Naive thymus-derived CD8-positive, alpha-beta T cell (primary cell): ENCODE measurements at regions of chr11 and their contacts with region 1.

Region 1: DNA sequence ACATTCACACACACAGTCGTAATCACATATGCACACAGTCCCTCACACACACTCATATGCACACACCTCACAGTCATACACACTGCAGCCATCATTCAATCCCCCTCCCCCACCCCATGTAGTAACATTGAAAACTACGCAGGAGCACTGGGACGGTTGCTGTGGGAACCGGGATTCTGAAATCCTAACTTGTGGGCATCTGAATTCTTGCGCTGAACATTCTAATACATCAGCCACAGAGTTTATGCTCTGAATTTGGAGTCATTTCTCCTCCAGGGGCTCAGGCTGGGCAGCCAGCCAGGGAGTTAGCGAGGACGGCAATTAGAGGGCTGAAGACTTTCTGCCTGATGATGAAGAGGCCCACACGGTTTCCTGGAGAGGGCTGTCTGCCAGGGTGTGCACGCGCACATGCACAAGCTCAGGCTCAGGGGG is 32.7 kb downstream of the CD6 start:
- DNase-seq: peak in 7 of 10 donors; percentile 35 to 74 (median 47)
- ATAC-seq: peak; percentile 64 to 71
- H3K4me3 Mint-ChIP-seq: peak overlapping the region; percentile 60 to 88 (median 78)
- H3K27ac Mint-ChIP-seq: peak overlapping the region; percentile 88 to 98 (median 95)
- H3K4me1 Mint-ChIP-seq: peaks cover 44 to 88% (median 80%) of the 10 kb centered on the region in 4 donors
- H3K27me3 Mint-ChIP-seq: no peaks in the 10 kb centered on the region

Region 2: DNA sequence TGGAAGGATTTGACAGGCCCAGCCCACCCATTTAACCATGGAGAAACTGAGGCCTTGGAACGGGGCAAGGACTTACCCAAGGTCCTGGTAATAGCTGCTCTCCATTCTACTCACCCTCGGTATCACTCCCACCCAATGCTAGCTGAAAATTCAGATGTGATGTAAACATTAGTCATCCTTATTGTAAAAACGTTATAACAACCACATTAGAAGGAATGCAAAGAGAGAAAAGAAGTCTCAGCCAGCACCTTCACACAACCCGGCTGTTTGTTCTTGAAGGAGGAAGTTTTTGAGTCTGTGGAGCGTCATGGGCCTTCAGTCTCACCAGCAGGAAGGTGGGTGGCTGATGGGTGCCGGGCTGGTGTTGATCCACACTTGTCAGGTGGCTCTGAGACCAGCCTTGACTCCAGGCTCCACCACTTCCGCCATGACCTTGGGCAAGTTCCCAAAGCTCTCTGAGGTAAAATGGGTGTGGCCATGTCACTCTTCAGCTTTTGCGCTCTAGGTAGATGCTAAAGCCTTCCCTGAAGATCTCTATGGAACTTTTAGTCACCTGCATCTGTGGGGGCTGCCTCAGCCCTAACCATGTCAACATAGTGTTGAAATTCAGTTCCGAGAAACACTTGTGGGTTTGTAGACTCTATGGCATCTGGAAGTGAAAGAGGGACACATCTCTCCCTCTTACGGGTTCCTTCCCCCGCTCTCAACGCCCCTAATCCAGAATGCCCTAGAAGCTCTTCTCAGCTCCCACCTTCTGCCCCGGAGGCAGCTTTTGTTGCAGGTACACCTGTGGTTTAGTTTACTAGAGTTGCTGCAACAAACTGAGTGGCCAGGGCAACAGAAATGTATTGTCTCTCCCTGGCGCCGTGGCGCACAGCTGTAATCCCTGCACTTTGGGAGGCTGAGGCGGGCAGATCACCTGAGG is 17.9 kb before region 1 on chr11:
- POLR2A ChIA-PET with region 1: interaction called, 44 read pairs
- DNase-seq: peak; percentile 76 to 98 (median 95)
- ATAC-seq: peak; percentile 87 to 91
- H3K4me3 Mint-ChIP-seq: peak overlapping the region; percentile 54 to 85 (median 76)
- H3K27ac Mint-ChIP-seq: peak overlapping the region; percentile 93 to 100 (median 99)
- H3K4me1 Mint-ChIP-seq: peaks cover 44 to 93% (median 90%) of the 10 kb centered on the region in 4 donors
- H3K27me3 Mint-ChIP-seq: no peaks in the 10 kb centered on the region

Region 3: DNA sequence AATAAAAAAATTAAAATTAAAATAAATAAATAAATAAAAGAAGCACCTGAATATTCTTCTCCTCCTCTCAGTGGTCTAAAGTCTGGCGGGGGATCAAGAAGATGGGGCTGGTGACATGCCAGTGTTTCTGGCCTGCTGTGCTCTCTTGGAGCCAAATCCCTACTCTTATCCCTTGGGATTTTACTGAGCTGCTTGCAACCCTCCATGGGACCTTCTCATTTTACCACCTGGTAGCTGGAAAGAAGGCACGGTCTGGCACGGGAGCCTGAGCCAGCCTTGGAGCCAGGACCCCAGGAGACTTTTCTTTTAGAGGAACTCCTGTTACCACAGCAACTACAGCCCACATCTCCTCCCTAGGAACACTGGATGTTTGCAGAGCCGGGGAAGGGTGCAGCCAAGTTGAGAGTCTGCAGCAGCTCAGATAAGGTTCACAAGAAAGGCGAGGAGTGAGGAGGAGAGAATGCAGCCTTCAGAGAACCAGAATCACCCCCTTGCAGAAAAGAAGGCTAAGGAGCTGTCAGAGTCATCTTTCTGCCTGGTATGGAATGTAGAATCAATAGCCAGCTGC is 11.3 kb before region 1 on chr11:
- POLR2A ChIA-PET with region 1: interaction called, 44 read pairs
- DNase-seq: no peak
- ATAC-seq: no peak
- H3K4me3 Mint-ChIP-seq: peak overlapping the region in 8 of 10 donors; percentile 7 to 75 (median 28)
- H3K27ac Mint-ChIP-seq: peak overlapping the region; percentile 71 to 94 (median 80)
- H3K4me1 Mint-ChIP-seq: peaks cover 37 to 83% (median 65%) of the 10 kb centered on the region in 4 donors
- H3K27me3 Mint-ChIP-seq: no peaks in the 10 kb centered on the region

Region 4: DNA sequence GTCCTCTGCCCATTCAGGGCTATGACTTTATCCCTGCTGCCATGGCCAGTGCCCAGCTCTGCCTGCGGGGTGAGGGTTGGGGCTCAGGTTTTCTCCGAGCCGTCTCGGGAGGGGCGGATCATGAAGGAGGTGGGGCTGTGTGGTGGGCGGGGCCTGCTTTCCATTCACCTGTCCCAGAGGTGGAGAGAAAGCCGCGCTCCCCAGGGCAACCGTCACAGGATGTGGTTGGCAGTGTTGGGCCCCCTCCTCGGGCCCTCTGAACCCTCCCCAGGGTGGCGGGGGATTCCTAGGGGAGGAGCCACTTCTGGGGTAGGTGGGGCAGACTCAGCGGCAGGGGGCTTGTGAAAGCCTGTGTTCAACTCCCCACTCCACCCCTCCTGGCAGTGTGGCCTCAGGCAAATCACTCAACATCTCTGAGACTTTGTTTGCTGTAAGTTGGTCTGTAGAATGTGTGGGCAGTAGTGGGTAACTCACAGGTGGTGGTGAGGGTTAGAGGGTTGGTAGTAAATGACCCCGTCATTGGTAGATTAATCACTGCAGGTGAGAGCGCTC is 17.5 kb after region 1 on chr11:
- POLR2A ChIA-PET with region 1: interaction called, 48 read pairs
- DNase-seq: peak; percentile 72 to 97 (median 93)
- ATAC-seq: peak; percentile 60 to 81
- H3K4me3 Mint-ChIP-seq: peak overlapping the region; percentile 68 to 86 (median 76)
- H3K27ac Mint-ChIP-seq: peak overlapping the region; percentile 89 to 100 (median 98)
- H3K4me1 Mint-ChIP-seq: peaks cover 44 to 85% (median 72%) of the 10 kb centered on the region in 4 donors
- H3K27me3 Mint-ChIP-seq: no peaks in the 10 kb centered on the region

Region 5: GRCh38 chr11:61028272-61028761 is 24.1 kb after region 1 on chr11:
- POLR2A ChIA-PET with region 1: interaction called, 28 read pairs
- DNase-seq: peak; percentile 44 to 84 (median 57)
- ATAC-seq: peak; percentile 7 to 31
- H3K4me3 Mint-ChIP-seq: peak overlapping the region; percentile 78 to 98 (median 86)
- H3K27ac Mint-ChIP-seq: peak overlapping the region; percentile 95 to 99 (median 98)
- H3K4me1 Mint-ChIP-seq: peaks cover 41 to 90% (median 80%) of the 10 kb centered on the region in 4 donors
- H3K27me3 Mint-ChIP-seq: no peaks in the 10 kb centered on the region